HEK293T (cell line): ENCODE measurements at regions of chr5 and their contacts with region 1.

Region 1: GRCh38 chr5:118249386-118249785 is 739.0 kb downstream of the DTWD2 start:
- DNase-seq: no peak

Region 2: GRCh38 chr5:116531635-116532034 is 1717.8 kb before region 1 on chr5:
- CTCF ChIA-PET with region 1: interaction called, 11 read pairs
- POLR2A ChIA-PET with region 1: no interaction called
- DNase-seq: no peak

Region 3: GRCh38 chr5:118301696-118302095 is 52.3 kb after region 1 on chr5:
- CTCF ChIA-PET with region 1: no interaction called
- POLR2A ChIA-PET with region 1: no interaction called
- DNase-seq: no peak